Activated CD4-positive, alpha-beta memory T cell treated with anti-CD3 and anti-CD28 coated beads, Interleukin-2, amount 10 ng/mL, durations not matched to agents 7 days and 5 days (primary cell): ENCODE measurements at regions of chr6 and their contacts with region 1.

Region 1: GRCh38 chr6:56851541-56852259 is 103.2 kb upstream of the BEND6 start:
- DNase-seq: peak; percentile 70
- H3K4me3 Mint-ChIP-seq: peak overlapping the region; percentile 71
- H3K27ac Mint-ChIP-seq: peak overlapping the region; percentile 63
- H3K4me1 Mint-ChIP-seq: peaks cover 23% of the 10 kb centered on the region
- H3K27me3 Mint-ChIP-seq: peaks cover 27% of the 10 kb centered on the region

Region 2: GRCh38 chr6:56637640-56638039 is 214.1 kb before region 1 on chr6:
- CTCF ChIA-PET with region 1: interaction called, 17 read pairs
- POLR2A ChIA-PET with region 1: interaction called, 3 read pairs
- DNase-seq: no peak
- H3K4me3 Mint-ChIP-seq: no peak overlapping the region
- H3K27ac Mint-ChIP-seq: no peak overlapping the region
- H3K4me1 Mint-ChIP-seq: no peaks in the 10 kb centered on the region
- H3K27me3 Mint-ChIP-seq: peaks cover 4% of the 10 kb centered on the region

Region 3: DNA sequence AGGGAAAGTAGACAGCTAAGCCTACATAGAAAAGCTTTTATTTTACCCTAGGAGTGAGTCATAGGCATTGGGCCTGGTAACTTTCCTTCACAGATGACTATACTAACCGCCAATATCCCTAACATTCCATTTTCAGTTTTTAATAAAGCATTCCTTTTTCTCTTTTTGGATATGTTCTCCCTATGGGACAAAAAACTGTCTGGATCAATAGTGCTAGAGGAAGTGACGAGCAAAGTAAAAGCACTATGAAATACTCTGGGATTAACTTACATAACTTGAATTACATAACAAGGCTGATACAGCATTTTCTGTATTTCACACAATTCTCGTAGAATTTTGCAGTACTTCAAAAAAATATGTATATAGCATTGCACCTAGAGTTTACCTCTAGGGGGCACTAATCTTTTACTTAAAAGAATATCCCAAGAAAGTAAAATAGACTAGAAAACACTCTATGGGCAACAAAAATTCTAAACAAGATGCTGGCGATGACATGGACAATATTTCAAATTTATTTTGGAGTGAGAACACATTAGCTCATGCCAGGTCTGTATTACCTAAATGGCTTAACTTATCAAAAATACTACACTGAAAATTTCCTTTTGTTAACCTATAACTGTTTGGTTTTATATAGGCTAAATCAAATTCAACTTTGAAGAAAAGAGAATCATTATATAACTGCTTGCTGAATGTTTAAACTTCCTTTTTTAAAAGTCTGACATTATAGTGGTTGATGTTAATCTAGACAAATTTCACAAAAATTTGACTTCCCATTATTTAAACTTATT is 142.7 kb before region 1 on chr6:
- CTCF ChIA-PET with region 1: interaction called, 24 read pairs
- POLR2A ChIA-PET with region 1: no interaction called
- DNase-seq: no peak
- H3K4me3 Mint-ChIP-seq: no peak overlapping the region
- H3K27ac Mint-ChIP-seq: no peak overlapping the region
- H3K4me1 Mint-ChIP-seq: no peaks in the 10 kb centered on the region
- H3K27me3 Mint-ChIP-seq: peaks cover 6% of the 10 kb centered on the region

Region 4: DNA sequence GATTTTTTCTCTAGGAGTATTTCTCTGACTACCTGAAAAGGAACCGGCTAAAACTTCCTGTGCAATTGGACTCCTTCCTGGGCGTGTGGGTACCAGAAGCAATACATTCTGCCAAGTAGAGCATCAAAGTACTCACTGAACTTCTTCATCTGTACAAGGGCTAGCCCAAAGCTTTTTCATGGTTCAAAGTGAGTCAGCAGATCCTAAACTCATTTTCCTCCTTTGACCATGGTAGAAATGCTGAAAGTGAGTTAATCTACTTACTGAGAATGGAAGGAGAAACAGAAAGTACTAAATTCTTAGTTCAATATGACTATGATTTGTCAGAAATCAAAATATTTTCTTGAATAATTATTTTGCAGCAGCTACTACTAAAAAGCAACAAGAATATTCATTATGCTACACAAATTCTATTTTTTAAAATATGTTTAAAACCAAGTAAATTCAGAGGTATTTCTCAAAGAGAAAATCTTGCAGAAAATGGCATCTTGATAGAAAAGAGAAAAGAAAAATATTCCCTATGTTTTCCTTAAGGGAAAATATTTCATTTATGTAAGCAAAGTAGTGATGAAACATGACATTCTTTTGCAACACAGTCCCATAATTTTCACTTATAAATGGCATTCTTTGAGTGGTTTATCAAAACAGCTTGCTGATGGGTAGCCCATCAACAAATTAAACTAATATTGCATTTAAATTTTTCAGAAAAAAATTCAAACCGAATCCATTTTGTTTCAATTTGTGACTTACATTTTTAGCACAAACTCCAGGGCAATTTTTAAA is 99.5 kb after region 1 on chr6:
- CTCF ChIA-PET with region 1: no interaction called
- POLR2A ChIA-PET with region 1: no interaction called
- DNase-seq: no peak
- H3K4me3 Mint-ChIP-seq: no peak overlapping the region
- H3K27ac Mint-ChIP-seq: no peak overlapping the region
- H3K4me1 Mint-ChIP-seq: peaks cover 23% of the 10 kb centered on the region
- H3K27me3 Mint-ChIP-seq: peaks cover 68% of the 10 kb centered on the region